ENCODE measurements at regions of chr1 and their contacts with region 1.

Region 1: GRCh38 chr1:235783148-235783776 is 83.4 kb downstream of the LYST start:
- DNase-seq: no peak
- H3K4me3 Mint-ChIP-seq: no peak overlapping the region
- H3K27ac Mint-ChIP-seq: no peak overlapping the region
- H3K4me1 Mint-ChIP-seq: no peaks in the 10 kb centered on the region
- H3K27me3 Mint-ChIP-seq: no peaks in the 10 kb centered on the region

Region 2: DNA sequence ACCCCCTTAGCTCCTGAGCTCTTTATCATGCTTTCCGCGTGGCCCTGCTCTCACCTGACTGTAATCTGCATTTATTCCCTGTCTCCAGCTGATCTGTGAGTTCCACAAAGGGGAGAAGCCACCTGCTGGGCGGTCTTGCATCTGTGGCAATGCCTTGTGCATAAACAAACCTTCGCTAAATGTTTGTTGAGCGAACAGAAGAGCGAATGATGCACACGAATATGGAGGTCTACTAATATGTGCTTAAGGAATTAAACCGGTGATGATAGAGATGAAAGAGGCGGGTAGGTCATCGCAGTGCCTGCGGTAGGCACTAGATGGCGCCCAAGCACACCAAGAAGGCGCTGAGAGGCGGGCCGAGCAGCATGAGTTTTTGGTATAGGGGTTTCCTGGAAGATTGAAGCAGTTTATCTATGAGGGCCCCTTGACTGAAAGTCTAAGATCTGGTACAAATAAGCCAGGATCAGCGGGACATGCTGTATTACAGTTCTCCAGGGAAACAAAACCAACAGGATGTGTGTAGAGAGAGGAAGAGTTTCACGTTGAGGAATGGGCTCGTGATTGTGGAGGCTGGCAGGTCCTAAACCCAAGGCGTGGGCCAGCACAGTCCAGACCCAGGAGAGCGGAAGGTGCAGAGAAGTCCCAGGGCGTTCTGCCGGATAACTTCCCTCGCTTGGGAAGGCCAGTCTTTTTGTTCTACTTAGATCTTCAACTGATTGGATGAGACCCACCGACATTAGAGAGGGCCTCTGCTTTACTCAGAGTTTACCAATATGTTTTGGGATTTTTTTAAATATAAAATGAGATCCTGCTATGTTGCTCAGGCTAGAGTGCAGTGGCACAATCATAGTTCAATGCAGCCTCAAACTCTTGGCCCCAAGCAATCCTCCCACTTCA is 689.3 kb before region 1 on chr1:
- CTCF ChIA-PET with region 1: no interaction called
- intact Hi-C with region 1: loop called (anchors 2 kb)
- DNase-seq: peak; percentile 92
- H3K4me3 Mint-ChIP-seq: no peak overlapping the region
- H3K27ac Mint-ChIP-seq: no peak overlapping the region
- H3K4me1 Mint-ChIP-seq: peaks cover 7% of the 10 kb centered on the region
- H3K27me3 Mint-ChIP-seq: peaks cover 2% of the 10 kb centered on the region

Region 3: DNA sequence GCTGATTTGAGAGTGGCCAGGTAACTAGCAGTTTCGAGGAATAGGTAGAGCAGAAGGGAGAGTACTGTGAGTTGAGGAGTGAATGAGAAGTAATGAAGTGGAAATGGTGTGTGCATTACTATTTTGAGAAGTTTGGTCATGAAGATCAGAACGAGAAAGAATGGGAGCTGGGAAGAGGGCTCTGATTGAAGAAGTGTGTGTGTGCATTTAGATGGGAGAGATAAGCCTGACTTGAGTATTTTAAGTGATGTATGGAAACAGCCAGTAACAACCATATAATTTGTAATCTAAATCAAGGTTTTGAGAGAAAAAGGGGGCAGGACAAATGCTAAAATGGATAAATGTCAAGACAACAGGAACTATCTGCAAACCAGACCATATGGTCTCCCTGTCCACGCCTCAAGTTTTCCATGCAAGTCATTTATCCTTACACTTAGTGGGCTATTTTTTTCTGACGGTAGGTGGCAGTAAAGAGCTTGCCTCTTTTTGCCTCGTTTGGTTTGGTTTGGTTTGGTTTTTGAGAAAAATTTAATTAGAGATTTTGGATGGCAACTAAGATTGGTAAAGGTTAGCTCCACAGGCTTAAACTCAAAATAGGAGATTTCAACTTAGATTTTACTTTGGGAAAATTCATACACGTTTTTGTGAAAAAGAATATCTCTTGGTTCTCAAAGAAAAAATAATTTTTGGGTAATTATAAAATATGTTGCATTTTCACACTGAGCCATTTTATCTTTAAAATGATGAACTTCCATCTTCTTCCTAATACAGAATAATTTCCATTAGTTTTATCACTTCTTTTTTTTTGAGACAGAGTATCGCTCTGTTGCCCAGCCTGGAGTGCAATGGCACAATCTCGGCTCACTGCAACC is 269.5 kb before region 1 on chr1:
- CTCF ChIA-PET with region 1: interaction called, 21 read pairs
- intact Hi-C with region 1: loop called (anchors 1 kb)
- DNase-seq: peak; percentile 54
- H3K4me3 Mint-ChIP-seq: no peak overlapping the region
- H3K27ac Mint-ChIP-seq: no peak overlapping the region
- H3K4me1 Mint-ChIP-seq: no peaks in the 10 kb centered on the region
- H3K27me3 Mint-ChIP-seq: no peaks in the 10 kb centered on the region

Region 4: GRCh38 chr1:235601104-235601503 is 182.2 kb before region 1 on chr1:
- CTCF ChIA-PET with region 1: interaction called, 10 read pairs
- intact Hi-C with region 1: no loop called
- DNase-seq: peak; percentile 45
- H3K4me3 Mint-ChIP-seq: no peak overlapping the region
- H3K27ac Mint-ChIP-seq: no peak overlapping the region
- H3K4me1 Mint-ChIP-seq: no peaks in the 10 kb centered on the region
- H3K27me3 Mint-ChIP-seq: no peaks in the 10 kb centered on the region

Region 5: GRCh38 chr1:235739124-235739523 is 44.1 kb before region 1 on chr1:
- CTCF ChIA-PET with region 1: no interaction called
- intact Hi-C with region 1: loop called (anchors 5 kb)
- DNase-seq: no peak
- H3K4me3 Mint-ChIP-seq: no peak overlapping the region
- H3K27ac Mint-ChIP-seq: no peak overlapping the region
- H3K4me1 Mint-ChIP-seq: peaks cover 2% of the 10 kb centered on the region
- H3K27me3 Mint-ChIP-seq: no peaks in the 10 kb centered on the region

Region 6: GRCh38 chr1:235843461-235843961 is 60.2 kb after region 1 on chr1:
- CTCF ChIA-PET with region 1: interaction called, 18 read pairs
- intact Hi-C with region 1: loop called (anchors 1 kb)
- DNase-seq: no peak
- H3K4me3 Mint-ChIP-seq: no peak overlapping the region
- H3K27ac Mint-ChIP-seq: no peak overlapping the region
- H3K4me1 Mint-ChIP-seq: peaks cover 48% of the 10 kb centered on the region
- H3K27me3 Mint-ChIP-seq: no peaks in the 10 kb centered on the region